ENCODE measurements at regions of chr3 and their contacts with region 1.

Region 1: DNA sequence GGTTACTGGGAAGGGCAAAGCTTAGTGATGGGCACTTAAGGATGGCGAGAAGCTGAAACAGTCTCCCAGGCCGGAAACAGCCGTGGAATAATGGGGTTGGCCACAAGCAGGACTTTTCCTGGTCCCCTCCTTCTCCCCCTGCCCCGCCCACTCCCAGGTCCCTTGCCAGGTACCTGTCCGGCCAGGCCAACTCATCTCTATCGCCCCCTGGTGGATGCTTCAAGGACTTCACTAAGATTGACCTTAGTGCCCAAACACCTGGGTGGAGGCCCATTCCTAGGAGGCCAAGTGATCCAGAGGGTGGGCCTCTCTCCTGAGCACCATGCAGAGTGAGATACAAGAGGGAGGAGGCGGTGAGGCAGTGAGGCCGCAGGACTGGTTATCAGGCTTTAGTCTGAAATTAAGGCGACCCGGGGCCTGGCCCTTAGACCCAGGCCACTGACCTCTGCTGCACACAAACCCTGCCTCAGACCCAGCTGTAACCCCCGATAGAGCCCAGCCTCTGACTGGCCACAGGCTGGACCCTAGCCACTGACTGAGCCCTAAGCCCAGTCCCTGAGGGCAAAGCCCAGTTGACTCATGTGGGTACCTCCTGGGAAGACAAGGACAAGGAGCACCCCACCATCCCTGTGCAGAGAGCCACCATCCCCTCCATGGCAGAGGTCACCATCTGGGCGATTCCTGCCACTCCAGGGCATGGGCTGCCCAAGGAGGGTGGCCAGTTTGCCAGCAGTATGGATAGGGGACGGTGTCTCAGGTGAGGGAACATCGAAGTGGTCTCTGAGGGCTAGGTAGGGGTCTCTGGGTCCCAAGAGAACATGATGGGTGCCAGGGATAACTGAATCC is 37.6 kb downstream of the VIPR1 start:
- DNase-seq: peak; percentile 75
- ATAC-seq: peak; percentile 75
- H3K4me3 Mint-ChIP-seq: no peak overlapping the region
- H3K27ac Mint-ChIP-seq: no peak overlapping the region
- H3K4me1 Mint-ChIP-seq: peaks cover 6% of the 10 kb centered on the region
- H3K27me3 Mint-ChIP-seq: no peaks in the 10 kb centered on the region

Region 2: DNA sequence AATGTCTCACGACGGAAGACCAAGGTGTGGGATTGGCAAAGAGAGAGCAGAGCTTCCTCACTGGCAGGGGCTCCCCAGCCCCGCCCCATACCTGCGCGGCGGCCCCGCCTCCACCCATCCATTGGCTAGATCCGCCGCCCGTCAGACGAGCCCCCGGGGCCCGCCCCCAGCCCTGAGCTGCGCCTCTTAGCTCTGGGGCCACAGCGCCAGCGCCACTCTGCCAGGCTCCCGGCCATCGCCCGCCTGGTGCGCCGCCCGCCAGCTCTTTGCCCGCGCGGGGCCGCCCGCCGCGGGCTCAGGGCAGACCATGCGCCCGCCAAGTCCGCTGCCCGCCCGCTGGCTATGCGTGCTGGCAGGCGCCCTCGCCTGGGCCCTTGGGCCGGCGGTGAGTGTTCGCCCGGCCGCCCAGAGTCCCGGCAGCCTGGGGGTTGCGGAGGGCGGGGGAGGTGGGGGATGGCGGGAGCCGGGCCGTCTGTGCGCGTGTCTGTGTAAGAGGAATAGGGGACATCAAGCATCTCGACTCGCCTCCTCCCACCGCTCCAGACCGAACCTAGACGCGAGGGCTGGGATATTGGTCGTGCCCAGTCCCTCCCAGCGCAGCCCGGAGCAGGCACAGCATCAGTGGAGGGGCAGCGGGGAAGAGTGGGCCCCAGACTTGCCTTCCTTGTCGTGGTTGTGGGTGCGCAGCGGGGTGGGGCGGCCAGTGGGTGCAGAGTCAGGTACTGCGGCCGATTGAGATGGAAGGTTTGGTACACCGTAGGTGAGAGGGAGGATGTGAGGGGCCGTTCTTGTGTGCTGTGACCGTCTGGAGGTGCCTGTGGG is 37.5 kb before region 1 on chr3 and contains the start of gene VIPR1:
- CTCF ChIA-PET with region 1: interaction called, 183 read pairs
- POLR2A ChIA-PET with region 1: interaction called, 3 read pairs
- DNase-seq: peak; percentile 91
- ATAC-seq: peak; percentile 97
- H3K4me3 Mint-ChIP-seq: peak within 1 kb of the TSS; percentile 86
- H3K27ac Mint-ChIP-seq: peak within 1 kb of the TSS; percentile 41
- H3K4me1 Mint-ChIP-seq: peaks cover 35% of the 10 kb centered on the region
- H3K27me3 Mint-ChIP-seq: peaks cover 28% of the 10 kb centered on the region
- total RNA-seq, gene VIPR1: 9.1 to 9.5 TPM

Region 3: DNA sequence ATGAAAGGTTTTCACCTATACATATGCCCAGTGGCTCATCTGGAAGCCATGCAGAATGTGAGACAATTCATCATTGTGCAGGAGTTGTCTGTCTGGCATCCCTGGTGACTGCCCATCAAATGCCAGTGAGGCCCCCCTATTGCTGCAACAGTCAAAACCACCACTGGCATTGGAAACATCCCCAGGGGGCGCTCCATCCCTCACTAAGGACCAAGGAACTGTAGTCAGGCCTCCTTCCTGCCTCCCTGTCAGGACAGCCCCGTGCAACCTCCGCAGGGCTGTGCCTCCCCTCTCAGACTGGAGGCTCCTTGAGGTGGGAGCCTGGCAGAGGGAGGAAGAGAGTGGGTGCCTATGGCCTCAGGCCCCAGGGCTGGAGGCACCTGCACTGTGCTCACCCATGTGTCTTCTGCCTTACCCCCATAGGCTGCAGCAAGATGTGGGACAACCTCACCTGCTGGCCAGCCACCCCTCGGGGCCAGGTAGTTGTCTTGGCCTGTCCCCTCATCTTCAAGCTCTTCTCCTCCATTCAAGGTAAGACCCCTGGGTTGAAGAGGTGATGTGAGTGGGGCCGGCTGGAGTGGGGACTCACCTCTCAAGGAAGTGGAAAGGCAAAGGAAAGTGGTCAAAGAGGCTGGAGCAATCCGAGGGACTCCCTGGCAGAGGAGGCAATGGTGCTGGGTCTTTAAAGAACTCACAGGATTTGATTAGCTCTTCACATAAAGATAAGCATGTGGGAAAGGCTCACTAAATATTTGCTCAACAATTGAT is 21.1 kb before region 1 on chr3:
- CTCF ChIA-PET with region 1: interaction called, 116 read pairs
- POLR2A ChIA-PET with region 1: no interaction called
- DNase-seq: peak; percentile 68
- ATAC-seq: peak; percentile 52
- H3K4me3 Mint-ChIP-seq: no peak overlapping the region
- H3K27ac Mint-ChIP-seq: peak overlapping the region; percentile 43
- H3K4me1 Mint-ChIP-seq: peaks cover 17% of the 10 kb centered on the region
- H3K27me3 Mint-ChIP-seq: no peaks in the 10 kb centered on the region

Region 4: GRCh38 chr3:42552830-42553229 is 12.7 kb after region 1 on chr3:
- CTCF ChIA-PET with region 1: interaction called, 82 read pairs
- POLR2A ChIA-PET with region 1: no interaction called
- DNase-seq: no peak
- ATAC-seq: no peak
- H3K4me3 Mint-ChIP-seq: no peak overlapping the region
- H3K27ac Mint-ChIP-seq: no peak overlapping the region
- H3K4me1 Mint-ChIP-seq: peaks cover 25% of the 10 kb centered on the region
- H3K27me3 Mint-ChIP-seq: no peaks in the 10 kb centered on the region

Measured in activated CD8-positive, alpha-beta T cell treated with anti-CD3 and anti-CD28 coated beads, Interleukin-2, amount 10 ng/mL, durations not matched to agents 7 days and 5 days (primary cell).